IMR-90 (cell line): ENCODE measurements at regions of chr1 and their contacts with region 1.

Region 1: DNA sequence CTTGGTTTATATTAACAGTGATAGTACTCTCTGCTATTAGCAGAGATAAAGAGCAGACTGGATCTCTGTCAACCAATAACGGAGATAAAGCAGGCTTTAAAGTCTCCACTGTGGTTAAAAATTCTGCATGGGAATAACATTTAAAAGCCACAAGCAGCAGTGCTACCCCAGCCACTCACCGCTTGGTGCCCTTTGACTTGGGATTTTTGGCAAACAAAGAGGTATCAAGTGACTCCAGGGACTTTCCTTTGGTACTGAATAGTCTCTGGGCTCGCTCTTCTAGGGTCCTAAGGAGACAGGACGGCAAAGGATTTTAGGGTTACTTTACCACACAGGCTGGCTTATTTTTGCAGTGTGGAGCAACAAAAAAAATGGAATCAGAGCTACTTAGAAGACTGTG is 11.3 kb downstream of the SF3A3 start:
- DNase-seq: no peak
- ATAC-seq: no peak
- H3K4me3 ChIP-seq: no peak overlapping the region
- H3K27ac ChIP-seq: no peak overlapping the region
- H3K4me1 ChIP-seq: no peaks in the 10 kb centered on the region
- H3K27me3 ChIP-seq: no peaks in the 10 kb centered on the region
- CTCF ChIP-seq: no peak
- POLR2A ChIP-seq: no peak
- RAD21 ChIP-seq: no peak

Region 2: GRCh38 chr1:37890378-37891014 is 88.0 kb before region 1 on chr1:
- CTCF ChIA-PET with region 1: interaction called, 3 read pairs
- POLR2A ChIA-PET with region 1: no interaction called
- dilution Hi-C with region 1: no loop called
- in situ Hi-C with region 1: no loop called
- intact Hi-C with region 1: loop called (anchors 1 kb)
- DNase-seq: peak; percentile 43
- ATAC-seq: peak; percentile 60; the same call in 1 of the 2 replicates
- H3K4me3 ChIP-seq: no peak overlapping the region
- H3K27ac ChIP-seq: no peak overlapping the region
- H3K4me1 ChIP-seq: peaks cover 2% of the 10 kb centered on the region; the same call in 1 of the 2 replicates
- H3K27me3 ChIP-seq: no peaks in the 10 kb centered on the region
- CTCF ChIP-seq: peak; percentile 62
- POLR2A ChIP-seq: no peak
- RAD21 ChIP-seq: peak; percentile 60